CD8-positive, alpha-beta T cell (primary cell): ENCODE measurements at regions of chr18 and their contacts with region 1.

Region 1: DNA sequence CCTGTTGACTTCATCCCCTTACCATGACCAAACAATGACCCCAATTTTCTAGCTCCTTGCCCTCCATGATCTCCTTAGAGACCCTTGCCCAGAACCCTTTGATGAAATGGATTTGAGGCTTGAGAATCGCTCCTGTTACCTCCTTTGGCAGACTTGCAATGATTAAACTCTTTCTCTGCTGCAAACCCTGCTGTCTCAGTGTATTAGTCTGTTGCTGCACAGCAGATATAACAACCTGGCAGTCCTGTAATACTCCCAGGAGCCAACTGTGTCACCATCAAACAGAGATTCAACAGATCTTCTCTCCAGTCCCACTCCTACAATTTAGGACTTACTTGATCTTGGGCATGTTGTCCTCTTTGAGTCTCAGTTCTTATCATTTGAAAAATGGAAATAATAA is 242.9 kb downstream of the HRH4 start:
- DNase-seq: no peak
- ATAC-seq: no peak
- H3K4me3 ChIP-seq: no peak overlapping the region
- H3K4me3 Mint-ChIP-seq: no peak overlapping the region
- H3K27ac ChIP-seq: no peak overlapping the region
- H3K27ac Mint-ChIP-seq: no peak overlapping the region
- H3K4me1 ChIP-seq: no peaks in the 10 kb centered on the region
- H3K4me1 Mint-ChIP-seq: no peaks in the 10 kb centered on the region
- H3K27me3 ChIP-seq: no peaks in the 10 kb centered on the region
- H3K27me3 Mint-ChIP-seq: peaks cover 23% of the 10 kb centered on the region
- CTCF ChIP-seq: no peak

Region 2: GRCh38 chr18:24721388-24721787 is 18.1 kb after region 1 on chr18:
- CTCF ChIA-PET with region 1: interaction called, 5 read pairs
- POLR2A ChIA-PET with region 1: no interaction called
- intact Hi-C with region 1: loop called in 1 of 2 experiments (anchors 1 kb)
- DNase-seq: no peak
- ATAC-seq: no peak
- H3K4me3 ChIP-seq: no peak overlapping the region
- H3K4me3 Mint-ChIP-seq: no peak overlapping the region
- H3K27ac ChIP-seq: no peak overlapping the region
- H3K27ac Mint-ChIP-seq: no peak overlapping the region
- H3K4me1 ChIP-seq: no peaks in the 10 kb centered on the region
- H3K4me1 Mint-ChIP-seq: no peaks in the 10 kb centered on the region
- H3K27me3 ChIP-seq: no peaks in the 10 kb centered on the region
- H3K27me3 Mint-ChIP-seq: peaks cover 2% of the 10 kb centered on the region
- CTCF ChIP-seq: no peak

Region 3: GRCh38 chr18:25042641-25043051 is 339.3 kb after region 1 on chr18:
- CTCF ChIA-PET with region 1: no interaction called
- POLR2A ChIA-PET with region 1: no interaction called
- intact Hi-C with region 1: no loop called
- DNase-seq: no peak
- ATAC-seq: no peak
- H3K4me3 ChIP-seq: no peak overlapping the region
- H3K4me3 Mint-ChIP-seq: no peak overlapping the region
- H3K27ac ChIP-seq: no peak overlapping the region
- H3K27ac Mint-ChIP-seq: no peak overlapping the region
- H3K4me1 ChIP-seq: no peaks in the 10 kb centered on the region
- H3K4me1 Mint-ChIP-seq: no peaks in the 10 kb centered on the region
- H3K27me3 ChIP-seq: no peaks in the 10 kb centered on the region
- H3K27me3 Mint-ChIP-seq: peaks cover 7% of the 10 kb centered on the region
- CTCF ChIP-seq: no peak

Region 4: DNA sequence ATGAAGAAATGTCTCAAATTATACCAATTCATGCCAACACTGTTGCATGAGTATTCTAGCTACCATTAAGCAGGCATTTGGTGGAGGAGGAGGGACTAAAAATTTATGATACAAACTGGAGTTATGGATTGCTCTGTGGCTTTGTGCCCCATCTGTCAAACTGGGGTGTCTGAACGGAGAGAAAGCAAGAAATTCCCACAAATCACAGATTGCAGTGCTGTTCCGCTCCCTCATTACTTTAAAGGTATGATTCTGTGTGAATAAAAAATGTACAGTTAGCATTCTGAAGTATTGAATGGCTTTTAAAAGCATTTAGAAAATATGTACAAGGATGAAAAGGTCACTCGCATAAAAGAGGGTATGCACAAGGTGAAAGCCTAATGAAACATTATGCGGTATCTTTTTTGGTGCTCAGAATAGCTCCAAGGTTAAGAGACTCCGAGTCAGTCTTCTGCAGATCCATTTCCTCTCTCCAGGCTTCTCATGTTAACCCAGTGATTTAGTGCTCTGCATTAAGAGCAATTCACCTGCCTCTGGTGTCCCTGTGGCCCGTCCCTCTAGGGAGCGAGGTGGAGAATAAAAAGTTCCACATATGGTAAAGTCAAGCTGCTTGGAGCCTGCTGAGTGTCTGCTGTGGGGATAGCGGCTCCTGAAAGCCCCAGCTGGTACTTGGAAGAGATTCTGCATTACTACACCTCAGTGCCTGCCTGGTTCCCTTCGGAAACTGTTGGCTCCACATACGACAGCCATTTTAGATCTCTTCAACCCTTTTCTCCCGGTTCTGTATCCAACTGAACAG is 464.5 kb after region 1 on chr18:
- CTCF ChIA-PET with region 1: no interaction called
- POLR2A ChIA-PET with region 1: no interaction called
- intact Hi-C with region 1: no loop called
- DNase-seq: no peak
- ATAC-seq: no peak
- H3K4me3 ChIP-seq: no peak overlapping the region
- H3K4me3 Mint-ChIP-seq: no peak overlapping the region
- H3K27ac ChIP-seq: no peak overlapping the region
- H3K27ac Mint-ChIP-seq: no peak overlapping the region
- H3K4me1 ChIP-seq: peaks cover 6% of the 10 kb centered on the region
- H3K4me1 Mint-ChIP-seq: peaks cover 24% of the 10 kb centered on the region
- H3K27me3 ChIP-seq: no peaks in the 10 kb centered on the region
- H3K27me3 Mint-ChIP-seq: no peaks in the 10 kb centered on the region
- CTCF ChIP-seq: no peak